CD14-positive monocyte (primary cell): ENCODE measurements at regions of chr1 and their contacts with region 1.

Region 1: DNA sequence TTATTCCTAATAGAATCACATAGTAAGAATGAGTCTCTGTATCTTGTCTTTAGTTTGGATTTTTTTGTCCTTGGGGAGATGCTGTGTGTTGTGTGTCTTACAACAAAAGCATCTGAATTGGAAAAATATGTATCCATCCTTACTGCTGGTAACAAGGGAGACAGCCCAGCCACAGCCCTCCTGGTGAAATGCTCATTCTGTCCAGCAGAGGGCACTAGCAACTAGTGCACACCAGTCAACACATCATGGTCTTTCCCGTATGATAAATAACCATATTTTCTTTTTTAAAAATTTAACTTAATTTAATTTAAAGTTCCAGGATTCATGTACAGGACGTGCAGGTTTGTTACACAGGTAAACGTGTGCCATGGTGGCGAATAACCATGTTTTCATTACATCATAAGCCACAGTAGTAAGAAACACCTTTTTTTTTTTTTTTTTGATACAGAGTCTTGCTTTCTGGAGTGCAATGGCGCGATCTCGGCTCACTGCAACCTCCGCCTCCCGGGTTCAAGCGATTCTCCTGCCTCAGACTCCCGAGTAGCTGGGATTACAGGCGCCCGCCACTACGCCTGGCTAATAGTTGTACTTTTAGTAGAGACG is 245.1 kb downstream of the PTBP2 start:
- DNase-seq: peak; percentile 32 to 53 (median 44)
- H3K4me3 ChIP-seq: no peak overlapping the region
- H3K4me3 Mint-ChIP-seq: no peak overlapping the region
- H3K27ac ChIP-seq: no peak overlapping the region
- H3K27ac Mint-ChIP-seq: no peak overlapping the region
- H3K4me1 ChIP-seq: no peaks in the 10 kb centered on the region
- H3K4me1 Mint-ChIP-seq: no peaks in the 10 kb centered on the region
- H3K27me3 ChIP-seq: no peaks in the 10 kb centered on the region
- H3K27me3 Mint-ChIP-seq: peaks cover 7 to 8% (median 8%) of the 10 kb centered on the region in 3 donors
- CTCF ChIP-seq: peak; percentile 92

Region 2: GRCh38 chr1:98053471-98054366 is 1087.1 kb after region 1 on chr1:
- intact Hi-C with region 1: loop called (anchors 2 to 5 kb)
- DNase-seq: peak; percentile 43 to 59 (median 53)
- H3K4me3 ChIP-seq: peak overlapping the region; percentile 18 to 79 (median 40)
- H3K4me3 Mint-ChIP-seq: peak overlapping the region; percentile 85 to 97
- H3K27ac ChIP-seq: no peak overlapping the region
- H3K27ac Mint-ChIP-seq: peak overlapping the region in 1 of 7 donors; percentile 36
- H3K4me1 ChIP-seq: peaks cover 17 to 28% of the 10 kb centered on the region in 2 donors
- H3K4me1 Mint-ChIP-seq: peaks cover 38% of the 10 kb centered on the region
- H3K27me3 ChIP-seq: peaks cover 47 to 62% of the 10 kb centered on the region in 2 donors
- H3K27me3 Mint-ChIP-seq: peaks cover 51 to 67% (median 55%) of the 10 kb centered on the region in 3 donors
- CTCF ChIP-seq: peak; percentile 94

Region 3: DNA sequence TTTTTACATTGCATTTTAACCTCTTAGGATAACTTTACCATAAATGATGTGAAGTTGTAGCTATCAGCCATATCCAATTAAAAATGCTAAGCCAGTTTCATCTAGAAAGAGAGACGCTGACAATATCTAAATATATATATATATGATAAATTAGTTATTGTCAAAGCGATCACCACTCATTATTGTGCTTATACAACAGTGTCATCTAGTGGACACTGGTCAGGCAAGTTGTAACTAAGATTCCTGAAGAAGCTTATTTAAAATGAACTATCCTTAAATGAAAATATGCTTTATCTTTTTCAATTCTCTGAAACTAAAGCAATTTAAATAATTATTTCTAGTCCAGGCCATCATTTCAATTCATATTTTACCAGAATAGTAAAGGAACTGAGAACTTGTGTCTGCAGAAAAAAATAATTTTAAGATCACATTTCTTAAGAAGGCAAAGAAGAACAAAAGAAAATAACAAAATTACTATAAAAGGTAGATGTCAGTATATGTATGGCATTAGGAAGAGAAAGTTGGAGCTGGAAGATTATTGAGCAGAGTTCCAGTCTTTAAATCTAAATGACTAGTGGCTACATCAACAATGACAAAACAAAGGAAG is 1501.6 kb after region 1 on chr1:
- intact Hi-C with region 1: loop called in 1 of 2 experiments (anchors 5 kb)
- DNase-seq: peak; percentile 9 to 40 (median 30)
- H3K4me3 ChIP-seq: no peak overlapping the region
- H3K4me3 Mint-ChIP-seq: no peak overlapping the region
- H3K27ac ChIP-seq: no peak overlapping the region
- H3K27ac Mint-ChIP-seq: no peak overlapping the region
- H3K4me1 ChIP-seq: peaks cover 0 to under 1% of the 10 kb centered on the region in 2 donors
- H3K4me1 Mint-ChIP-seq: peaks cover 7% of the 10 kb centered on the region
- H3K27me3 ChIP-seq: no peaks in the 10 kb centered on the region
- H3K27me3 Mint-ChIP-seq: peaks cover 0 to 4% (median 2%) of the 10 kb centered on the region in 3 donors
- CTCF ChIP-seq: peak; percentile 85